Heart left ventricle (tissue), 16 donors: ENCODE measurements at regions of chr6 and their contacts with region 1.

Region 1: GRCh38 chr6:170030821-170031471 is 259.9 kb downstream of the DLL1 start:
- DNase-seq: peak in 1 of 5 donors; percentile 14
- ATAC-seq: no peak
- H3K4me3 ChIP-seq: no peak overlapping the region
- H3K27ac ChIP-seq: peak overlapping the region in 1 of 12 donors; percentile 53
- H3K4me1 ChIP-seq: peaks cover 0 to 4% (median 0%) of the 10 kb centered on the region in 12 donors
- H3K27me3 ChIP-seq: no peaks in the 10 kb centered on the region
- CTCF ChIP-seq: no peak
- POLR2A ChIP-seq: no peak

Region 2: GRCh38 chr6:170209572-170210351 is 178.8 kb after region 1 on chr6:
- intact Hi-C with region 1: loop called in 1 of 10 experiments (anchors 5 kb)
- DNase-seq: peak in 1 of 5 donors; percentile 9
- ATAC-seq: no peak
- H3K4me3 ChIP-seq: no peak overlapping the region
- H3K27ac ChIP-seq: no peak overlapping the region
- H3K4me1 ChIP-seq: no peaks in the 10 kb centered on the region
- H3K27me3 ChIP-seq: peaks cover 0 to 21% (median 0%) of the 10 kb centered on the region in 9 donors
- CTCF ChIP-seq: no peak
- POLR2A ChIP-seq: no peak